Activated CD4-positive, alpha-beta T cell treated with anti-CD3 and anti-CD28 coated beads, Interleukin-2, amount 10 ng/mL, durations not matched to agents 24 days and 14 days (primary cell): ENCODE measurements at regions of chr12 and their contacts with region 1.

Region 1: DNA sequence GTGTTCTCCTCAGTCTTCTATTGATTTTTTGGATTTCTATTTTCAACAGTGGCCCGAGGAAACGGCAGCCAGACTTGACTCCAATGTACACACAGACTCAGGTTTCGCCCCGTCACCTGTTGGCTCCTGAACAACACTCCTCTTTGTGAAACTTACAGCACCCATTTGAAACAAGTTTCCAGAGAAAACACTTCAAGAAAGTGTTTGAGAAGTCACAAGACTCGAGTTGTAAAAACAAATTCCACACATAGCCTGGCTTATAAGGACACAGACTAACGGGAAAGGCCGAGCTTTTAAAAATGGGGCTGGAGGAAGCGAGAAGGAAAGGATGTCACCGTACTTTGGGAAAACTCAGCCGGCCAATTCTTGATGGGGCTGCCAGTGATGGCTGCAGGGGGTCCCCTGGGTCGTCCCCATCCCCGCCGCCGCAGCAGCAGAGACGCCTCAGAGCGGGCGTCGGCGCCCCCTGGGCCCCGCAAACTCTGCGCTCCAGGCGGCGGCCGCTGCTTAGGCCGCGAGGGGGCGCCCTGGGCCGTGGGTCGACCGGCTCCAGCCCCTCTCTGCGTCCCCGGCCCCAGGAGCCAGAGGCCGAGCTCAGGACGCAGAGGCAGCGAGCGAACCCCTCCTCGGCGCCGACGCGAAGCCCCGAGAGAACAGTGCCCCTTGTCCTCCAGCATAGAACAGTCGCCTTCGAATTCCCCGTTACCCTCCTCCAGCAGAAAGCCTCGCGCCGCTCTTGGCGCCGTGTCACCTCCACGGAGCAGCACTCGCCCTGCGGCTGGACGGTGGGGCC is 106.9 kb downstream of the PRICKLE1 start:
- DNase-seq: peak; percentile 87
- H3K4me3 Mint-ChIP-seq: peak overlapping the region; percentile 81
- H3K27ac Mint-ChIP-seq: no peak overlapping the region
- H3K4me1 Mint-ChIP-seq: peaks cover 8% of the 10 kb centered on the region
- H3K27me3 Mint-ChIP-seq: peaks cover 76% of the 10 kb centered on the region

Region 2: DNA sequence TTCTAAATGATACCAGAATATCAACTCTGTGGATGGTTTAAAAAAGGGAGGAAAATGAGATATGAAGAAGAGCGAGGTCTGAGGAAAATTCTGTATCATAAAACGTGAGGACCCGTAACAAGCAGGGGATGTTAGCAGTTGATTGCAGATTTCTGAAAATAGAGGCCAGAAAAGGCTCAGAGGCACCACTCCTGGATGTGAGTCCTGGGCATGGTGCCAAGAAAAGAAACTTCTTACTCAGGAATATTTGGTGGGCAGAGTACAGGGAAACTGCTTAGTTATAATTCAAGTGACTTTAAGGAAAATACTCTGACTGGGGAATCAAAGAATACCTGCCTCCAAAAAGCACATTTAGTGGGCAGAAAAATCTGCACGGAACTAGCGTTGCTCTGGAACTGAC is 21.4 kb after region 1 on chr12:
- intact Hi-C with region 1: no loop called
- DNase-seq: no peak
- H3K4me3 Mint-ChIP-seq: no peak overlapping the region
- H3K27ac Mint-ChIP-seq: no peak overlapping the region
- H3K4me1 Mint-ChIP-seq: no peaks in the 10 kb centered on the region
- H3K27me3 Mint-ChIP-seq: peaks cover 11% of the 10 kb centered on the region

Region 3: DNA sequence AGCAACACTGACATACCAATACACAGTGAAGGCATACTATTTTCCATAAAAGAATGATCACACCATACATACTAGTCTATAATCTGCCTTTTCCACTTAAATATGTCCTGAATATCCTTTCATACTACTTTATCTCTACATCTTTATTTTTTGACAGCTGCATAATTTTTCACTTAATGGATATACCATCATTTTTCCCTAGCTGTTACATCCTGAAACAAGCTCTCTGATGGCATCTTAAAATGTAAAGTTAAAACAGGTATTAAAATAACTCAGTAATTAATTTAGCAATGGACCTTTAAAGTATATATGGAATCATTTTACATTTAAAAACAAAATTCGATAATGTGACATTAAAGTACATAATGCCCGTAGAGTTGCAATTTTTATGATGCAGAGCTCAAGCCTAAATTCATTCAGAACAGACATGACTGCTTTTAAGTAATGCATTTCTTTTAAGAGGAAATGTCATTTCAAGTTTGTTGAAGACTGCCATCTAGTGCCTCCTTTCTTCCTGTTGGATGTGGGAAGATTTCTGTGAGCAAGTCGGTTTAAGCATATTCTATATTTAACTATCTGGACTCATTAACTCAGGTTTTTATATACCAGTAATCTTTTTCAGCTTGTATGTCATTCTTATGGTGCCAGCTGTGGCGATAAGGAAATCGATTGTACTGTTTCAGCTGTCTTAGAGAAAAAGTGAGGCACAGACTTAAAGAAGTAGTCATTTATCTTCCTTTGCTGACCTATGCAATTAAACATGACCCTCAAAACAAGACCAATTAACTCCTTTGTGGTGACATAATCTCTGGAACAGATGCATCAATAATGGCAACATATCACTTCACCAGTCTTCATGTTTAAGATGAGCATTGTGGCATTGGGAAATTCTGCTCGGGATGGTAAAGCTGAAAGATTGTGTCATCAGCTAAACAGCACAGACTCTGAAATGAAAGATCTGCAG is 86.6 kb after region 1 on chr12:
- intact Hi-C with region 1: loop called (anchors 1 kb)
- DNase-seq: peak; percentile 62
- H3K4me3 Mint-ChIP-seq: no peak overlapping the region
- H3K27ac Mint-ChIP-seq: no peak overlapping the region
- H3K4me1 Mint-ChIP-seq: no peaks in the 10 kb centered on the region
- H3K27me3 Mint-ChIP-seq: peaks cover 11% of the 10 kb centered on the region